ENCODE measurements at regions of chr9 and their contacts with region 1.

Region 1: DNA sequence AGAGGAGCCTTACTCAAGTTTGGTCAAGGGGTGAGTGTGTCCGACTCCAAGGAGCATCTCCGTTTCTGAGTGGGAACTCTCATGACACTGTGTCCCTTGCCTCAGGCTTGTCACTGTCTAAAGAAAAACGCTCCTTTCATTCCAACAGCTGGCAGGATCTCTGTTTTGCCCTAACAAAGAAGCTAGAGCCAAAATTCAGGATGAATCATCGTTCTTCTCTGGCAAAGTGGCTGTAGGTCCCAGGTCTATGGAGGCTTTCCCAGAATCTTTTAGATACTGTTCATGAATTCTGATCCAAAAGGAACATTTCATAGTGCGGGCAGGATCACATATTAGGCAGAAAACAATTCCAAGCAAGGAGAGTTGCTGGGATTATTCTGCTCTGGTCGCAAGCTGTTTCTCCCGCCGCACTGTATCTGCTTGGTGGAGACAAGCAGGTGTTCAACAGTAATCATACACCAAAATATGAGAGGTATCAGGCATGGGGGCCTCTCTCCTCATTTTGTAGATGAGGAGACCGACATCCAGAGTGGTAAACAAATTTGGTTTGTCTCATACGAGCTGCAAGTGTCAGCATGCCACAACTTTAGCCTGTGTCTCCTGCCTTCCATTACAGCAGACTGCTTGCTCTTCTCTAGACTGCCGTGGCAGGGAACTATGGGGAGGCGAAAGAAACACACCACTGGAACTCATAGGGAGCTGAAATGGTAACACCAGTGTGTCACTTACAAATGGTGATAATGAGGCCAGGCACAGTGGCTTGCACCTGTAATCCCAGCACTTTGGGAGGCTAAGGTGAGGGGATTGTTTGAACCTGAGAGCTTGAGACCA is 72.6 kb downstream of the ENTREP1 start:
- DNase-seq: no peak
- H3K4me3 ChIP-seq: no peak overlapping the region
- H3K27ac ChIP-seq: peak overlapping the region in 3 of 4 donors; percentile 43 to 74 (median 60)
- H3K4me1 ChIP-seq: peaks cover 0 to 15% (median 7%) of the 10 kb centered on the region in 4 donors
- H3K27me3 ChIP-seq: no peaks in the 10 kb centered on the region
- CTCF ChIP-seq: no peak
- EP300 ChIP-seq: no peak
- POLR2A ChIP-seq: no peak

Region 2: DNA sequence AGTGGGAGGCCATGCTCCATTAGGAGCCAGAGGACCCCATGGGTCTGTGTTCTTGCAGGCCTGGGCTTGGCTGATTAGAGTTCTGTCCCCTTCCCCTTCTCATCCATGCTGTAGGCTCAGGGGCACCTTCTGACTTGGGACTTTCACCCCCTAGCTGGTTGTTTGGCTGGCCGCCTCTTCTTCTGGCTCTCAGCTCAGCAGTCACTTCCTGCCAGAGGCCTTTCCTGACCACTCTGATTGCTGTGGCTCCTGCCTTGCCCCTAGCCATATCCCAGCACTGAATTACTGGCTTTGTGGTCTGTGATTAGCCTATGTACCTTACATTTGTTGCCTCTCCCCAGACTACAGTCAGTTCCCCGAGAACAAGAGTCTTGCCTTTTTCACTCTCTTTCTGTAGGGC is 58.0 kb before region 1 on chr9:
- intact Hi-C with region 1: loop called (anchors 10 kb)
- DNase-seq: no peak
- H3K4me3 ChIP-seq: no peak overlapping the region
- H3K27ac ChIP-seq: no peak overlapping the region
- H3K4me1 ChIP-seq: peaks cover 0 to 4% (median 0%) of the 10 kb centered on the region in 4 donors
- H3K27me3 ChIP-seq: no peaks in the 10 kb centered on the region
- CTCF ChIP-seq: no peak
- EP300 ChIP-seq: no peak
- POLR2A ChIP-seq: no peak

Measured in sigmoid colon (tissue), 7 donors.